ENCODE measurements at regions of chr5 and their contacts with region 1.

Region 1: DNA sequence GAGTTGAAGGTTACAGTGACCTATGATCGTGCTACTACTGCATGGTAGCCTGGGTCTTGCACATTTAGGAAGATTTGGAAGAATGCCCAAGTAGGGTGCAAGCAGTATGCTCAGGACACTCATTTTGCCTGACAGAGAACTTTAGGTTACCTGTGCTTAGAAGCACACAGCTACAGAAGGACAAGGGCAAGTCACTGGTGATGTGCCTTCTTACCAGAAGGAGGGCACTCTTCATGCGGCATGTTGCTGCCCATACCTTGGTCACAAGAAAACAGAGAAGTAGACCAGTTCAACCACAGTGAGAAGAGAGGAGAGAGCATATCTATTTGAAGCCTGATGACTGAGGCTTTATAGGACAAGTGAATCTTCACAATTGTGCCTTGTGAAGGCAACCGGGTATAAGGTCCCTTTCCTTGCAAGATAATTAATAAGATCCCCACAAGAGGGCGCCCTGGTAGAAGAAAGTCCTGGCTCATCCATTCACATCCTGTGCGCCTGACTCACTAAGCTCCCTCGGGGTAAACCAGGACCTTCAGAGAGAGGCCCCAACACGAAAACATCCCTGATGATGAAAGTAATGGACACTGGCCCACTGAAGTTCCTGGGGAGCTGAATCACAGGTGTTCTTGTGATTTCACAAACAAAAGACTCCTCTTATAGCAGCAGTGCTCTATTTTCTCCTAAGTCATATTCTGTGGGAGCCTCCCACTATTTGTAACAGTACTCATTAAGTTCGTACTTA is 38.1 kb upstream of the STARD4 start:
- DNase-seq: peak; percentile 59
- H3K4me3 Mint-ChIP-seq: no peak overlapping the region
- H3K27ac Mint-ChIP-seq: peak overlapping the region; percentile 40
- H3K4me1 Mint-ChIP-seq: peaks cover 45% of the 10 kb centered on the region
- H3K27me3 Mint-ChIP-seq: peaks cover 3% of the 10 kb centered on the region

Region 2: DNA sequence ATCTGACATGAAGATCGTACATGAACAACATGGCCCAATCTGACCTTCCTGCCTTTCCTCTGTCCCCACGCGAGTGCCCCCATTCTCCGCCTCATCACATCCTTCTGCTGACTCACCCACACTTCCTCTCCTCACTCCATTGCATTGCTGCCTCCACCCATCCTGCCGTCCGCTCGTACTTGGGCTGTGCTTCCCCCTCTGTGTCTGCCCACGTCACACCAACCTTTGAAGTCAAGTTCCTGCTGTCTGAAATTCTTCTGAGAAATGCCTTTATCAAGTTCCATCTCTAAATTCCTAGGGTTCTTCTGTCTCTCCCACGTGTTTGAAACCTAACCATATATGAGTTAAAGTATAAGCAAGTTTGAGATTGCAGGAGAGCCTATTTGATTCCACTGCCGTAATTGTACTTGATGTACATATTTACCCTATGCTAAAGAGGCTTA is 20.1 kb before region 1 on chr5:
- intact Hi-C with region 1: loop called (anchors 1 kb)
- DNase-seq: peak; percentile 82
- H3K4me3 Mint-ChIP-seq: peak overlapping the region; percentile 38
- H3K27ac Mint-ChIP-seq: peak overlapping the region; percentile 89
- H3K4me1 Mint-ChIP-seq: peaks cover 33% of the 10 kb centered on the region
- H3K27me3 Mint-ChIP-seq: no peaks in the 10 kb centered on the region

Region 3: GRCh38 chr5:111584651-111585050 is 34.2 kb after region 1 on chr5:
- intact Hi-C with region 1: loop called (anchors 2 kb)
- DNase-seq: no peak
- H3K4me3 Mint-ChIP-seq: no peak overlapping the region
- H3K27ac Mint-ChIP-seq: peak overlapping the region; percentile 23
- H3K4me1 Mint-ChIP-seq: peaks cover 29% of the 10 kb centered on the region
- H3K27me3 Mint-ChIP-seq: no peaks in the 10 kb centered on the region

Region 4: DNA sequence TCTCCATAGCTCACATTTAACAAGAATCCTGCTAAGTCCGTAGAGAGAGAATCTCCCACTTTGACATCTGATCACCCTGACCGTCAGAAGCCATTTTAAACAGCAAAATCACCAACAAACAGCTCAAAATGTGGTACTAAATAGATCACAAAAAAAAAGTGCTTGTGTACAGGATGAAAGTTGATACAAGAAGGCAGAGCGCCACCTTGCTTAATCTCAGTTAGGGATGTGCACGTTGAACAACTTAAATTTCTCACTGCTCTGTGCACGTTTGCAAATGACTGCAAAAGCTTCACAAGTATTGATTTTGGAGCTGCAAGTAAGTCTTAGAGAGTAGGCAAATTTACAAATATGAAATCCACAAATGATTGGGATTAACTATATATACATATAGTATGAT is 269.6 kb after region 1 on chr5:
- intact Hi-C with region 1: loop called (anchors 2 kb)
- DNase-seq: no peak
- H3K4me3 Mint-ChIP-seq: no peak overlapping the region
- H3K27ac Mint-ChIP-seq: no peak overlapping the region
- H3K4me1 Mint-ChIP-seq: no peaks in the 10 kb centered on the region
- H3K27me3 Mint-ChIP-seq: peaks cover 2% of the 10 kb centered on the region

Region 5: GRCh38 chr5:112004867-112005622 is 454.6 kb after region 1 on chr5:
- intact Hi-C with region 1: loop called (anchors 10 kb)
- DNase-seq: no peak
- H3K4me3 Mint-ChIP-seq: no peak overlapping the region
- H3K27ac Mint-ChIP-seq: no peak overlapping the region
- H3K4me1 Mint-ChIP-seq: no peaks in the 10 kb centered on the region
- H3K27me3 Mint-ChIP-seq: no peaks in the 10 kb centered on the region

Region 6: DNA sequence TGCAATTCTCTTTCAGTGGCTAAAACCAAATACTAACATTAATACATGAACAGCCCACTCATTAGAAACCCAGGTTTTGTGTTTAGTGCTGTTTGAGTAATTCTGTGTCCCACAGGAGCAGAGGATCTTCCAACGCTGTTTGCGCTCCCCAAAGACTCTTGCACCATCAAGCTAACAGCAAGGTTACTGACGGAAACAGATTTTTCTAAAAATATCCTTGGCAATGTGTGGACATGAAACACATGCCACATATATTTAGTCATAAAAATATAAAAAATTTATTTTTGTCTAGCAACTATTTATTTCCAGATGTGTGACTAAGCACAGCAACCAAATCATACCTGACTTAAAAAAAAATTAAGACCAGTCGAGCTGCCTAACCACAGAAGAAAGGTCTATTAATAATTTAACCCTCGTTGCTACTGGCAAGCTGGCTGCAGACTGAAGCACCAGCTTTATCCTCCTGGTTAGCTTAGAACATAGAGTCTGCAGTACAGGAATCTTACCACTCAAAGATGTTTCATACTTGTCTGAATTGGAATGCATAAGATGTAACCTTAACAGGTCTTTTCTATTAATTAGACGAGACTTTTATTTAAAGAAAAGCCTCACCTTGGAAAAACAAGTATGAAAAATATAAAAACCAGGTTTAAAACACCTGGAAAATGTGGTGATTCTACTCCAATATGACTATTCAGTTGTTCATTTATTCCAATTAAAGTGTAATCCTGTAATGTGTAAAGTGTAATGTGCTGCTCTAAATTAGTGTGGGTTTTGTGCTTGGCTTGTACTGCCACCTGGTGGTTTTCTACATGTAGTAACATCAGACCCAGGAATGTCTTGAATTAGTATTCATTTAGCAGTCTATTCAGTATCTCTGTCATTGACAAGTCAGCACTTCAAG is 596.1 kb after region 1 on chr5:
- intact Hi-C with region 1: loop called (anchors 1 kb)
- DNase-seq: peak; percentile 30
- H3K4me3 Mint-ChIP-seq: no peak overlapping the region
- H3K27ac Mint-ChIP-seq: no peak overlapping the region
- H3K4me1 Mint-ChIP-seq: no peaks in the 10 kb centered on the region
- H3K27me3 Mint-ChIP-seq: peaks cover 6% of the 10 kb centered on the region

Measured in activated T-helper 1 cell treated with anti-CD3 and anti-CD28 coated beads, Interleukin-12 subunit alpha, Interleukin-12 subunit beta, Interleukin-2, Interleukin-4 antibody, amounts not matched to agents 30 ng/mL and 10 ng/mL and 1 ng/mL, durations not matched to agents 14 hours and 24 hours and 36 hours (primary cell).